Activated CD8-positive, alpha-beta memory T cell treated with anti-CD3 and anti-CD28 coated beads, Interleukin-2, amount 10 ng/mL, durations not matched to agents 7 days and 5 days (primary cell): ENCODE measurements at regions of chr6 and their contacts with region 1.

Region 1: GRCh38 chr6:31087494-31088089 is 24.8 kb downstream of the C6orf15 start:
- DNase-seq: peak; percentile 91
- ATAC-seq: peak; percentile 97
- H3K4me3 Mint-ChIP-seq: no peak overlapping the region
- H3K27ac Mint-ChIP-seq: no peak overlapping the region
- H3K4me1 Mint-ChIP-seq: peaks cover 6% of the 10 kb centered on the region
- H3K27me3 Mint-ChIP-seq: peaks cover 23% of the 10 kb centered on the region

Region 2: GRCh38 chr6:30907758-30908591 is 179.6 kb before region 1 on chr6 and contains the start of gene GTF2H4:
- CTCF ChIA-PET with region 1: interaction called, 39 read pairs
- DNase-seq: peak; percentile 98
- ATAC-seq: peak; percentile 98
- H3K4me3 Mint-ChIP-seq: peak within 1 kb of the TSS; percentile 97
- H3K27ac Mint-ChIP-seq: peak within 1 kb of the TSS; percentile 78
- H3K4me1 Mint-ChIP-seq: peaks cover 19% of the 10 kb centered on the region
- H3K27me3 Mint-ChIP-seq: no peaks in the 10 kb centered on the region
- total RNA-seq, gene GTF2H4: 30.0 to 34.9 TPM

Region 3: DNA sequence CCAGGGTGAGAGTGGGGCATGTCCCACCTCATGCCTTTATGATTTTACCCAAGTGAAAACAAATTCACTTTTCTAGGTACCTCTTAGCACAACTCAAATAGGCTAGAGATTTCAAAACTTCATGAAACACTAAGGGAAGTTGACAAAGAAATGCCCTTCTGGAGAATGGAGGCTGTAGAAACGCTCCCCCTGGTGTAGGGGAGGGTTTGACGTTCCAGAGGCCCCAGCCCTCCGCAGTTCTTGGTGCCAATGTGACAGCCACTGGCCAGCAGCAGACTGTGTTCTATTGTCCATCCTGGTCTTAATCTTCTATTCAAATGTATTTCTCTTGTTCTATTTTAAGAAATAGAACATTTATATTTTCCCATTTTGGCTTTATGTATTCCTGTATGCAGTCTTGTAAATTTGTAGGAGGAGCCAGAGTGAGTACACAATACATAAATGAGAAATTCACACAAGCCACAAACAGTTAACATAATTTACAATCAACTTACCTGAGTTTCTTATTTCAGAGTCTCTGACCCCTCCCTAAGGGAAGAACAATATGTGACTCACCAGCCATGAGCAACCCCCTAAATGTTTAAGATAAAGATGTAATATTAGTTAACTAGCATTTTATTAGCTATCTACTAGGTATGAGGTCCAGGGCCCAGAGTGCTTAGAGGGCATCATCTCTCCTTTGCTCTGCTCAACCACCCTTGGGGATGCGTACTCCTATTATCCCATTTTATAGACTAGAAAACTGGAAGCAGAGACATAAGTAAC is 112.9 kb before region 1 on chr6:
- CTCF ChIA-PET with region 1: no interaction called
- DNase-seq: no peak
- ATAC-seq: no peak
- H3K4me3 Mint-ChIP-seq: no peak overlapping the region
- H3K27ac Mint-ChIP-seq: no peak overlapping the region
- H3K4me1 Mint-ChIP-seq: no peaks in the 10 kb centered on the region
- H3K27me3 Mint-ChIP-seq: peaks cover 65% of the 10 kb centered on the region

Region 4: GRCh38 chr6:31042806-31043205 is 44.8 kb before region 1 on chr6:
- CTCF ChIA-PET with region 1: interaction called, 11 read pairs
- DNase-seq: no peak
- ATAC-seq: no peak
- H3K4me3 Mint-ChIP-seq: no peak overlapping the region
- H3K27ac Mint-ChIP-seq: no peak overlapping the region
- H3K4me1 Mint-ChIP-seq: no peaks in the 10 kb centered on the region
- H3K27me3 Mint-ChIP-seq: peaks cover 58% of the 10 kb centered on the region

Region 5: DNA sequence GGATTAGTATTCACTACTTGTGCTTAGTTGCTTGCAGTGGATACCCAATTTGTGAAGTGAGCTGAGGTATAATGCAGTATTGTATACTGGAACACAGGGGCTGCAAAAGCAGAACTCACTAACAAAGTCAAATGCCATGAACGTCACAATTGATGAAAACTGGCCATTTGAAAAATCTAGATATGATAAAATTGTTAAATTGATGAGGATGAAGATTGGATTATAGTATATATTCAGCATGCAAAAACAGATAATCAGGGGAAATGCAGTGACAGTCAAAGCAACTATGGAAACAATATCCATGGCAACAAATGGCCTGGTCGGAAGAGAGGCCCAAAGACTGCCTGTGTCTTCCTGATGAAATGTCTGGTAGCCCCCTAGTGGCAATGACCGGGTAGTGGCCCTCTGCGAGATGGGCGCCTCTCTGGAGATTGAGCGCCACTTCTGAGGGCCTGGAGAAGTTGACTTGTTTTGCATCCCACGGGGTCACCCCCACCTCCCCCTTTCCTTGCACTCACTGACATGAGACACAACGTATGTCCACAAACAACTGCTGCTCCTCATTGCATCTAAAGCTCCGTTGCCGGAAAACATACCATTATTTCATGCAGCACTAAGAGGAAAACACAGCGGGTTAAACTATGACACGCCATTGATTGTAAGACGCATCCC is 18.8 kb before region 1 on chr6:
- CTCF ChIA-PET with region 1: interaction called, 36 read pairs
- DNase-seq: peak; percentile 85
- ATAC-seq: peak; percentile 99
- H3K4me3 Mint-ChIP-seq: no peak overlapping the region
- H3K27ac Mint-ChIP-seq: no peak overlapping the region
- H3K4me1 Mint-ChIP-seq: no peaks in the 10 kb centered on the region
- H3K27me3 Mint-ChIP-seq: peaks cover 15% of the 10 kb centered on the region

Region 6: GRCh38 chr6:31114970-31115849 is 27.6 kb after region 1 on chr6:
- CTCF ChIA-PET with region 1: no interaction called
- DNase-seq: no peak
- ATAC-seq: no peak
- H3K4me3 Mint-ChIP-seq: no peak overlapping the region
- H3K27ac Mint-ChIP-seq: no peak overlapping the region
- H3K4me1 Mint-ChIP-seq: no peaks in the 10 kb centered on the region
- H3K27me3 Mint-ChIP-seq: peaks cover 36% of the 10 kb centered on the region

Region 7: DNA sequence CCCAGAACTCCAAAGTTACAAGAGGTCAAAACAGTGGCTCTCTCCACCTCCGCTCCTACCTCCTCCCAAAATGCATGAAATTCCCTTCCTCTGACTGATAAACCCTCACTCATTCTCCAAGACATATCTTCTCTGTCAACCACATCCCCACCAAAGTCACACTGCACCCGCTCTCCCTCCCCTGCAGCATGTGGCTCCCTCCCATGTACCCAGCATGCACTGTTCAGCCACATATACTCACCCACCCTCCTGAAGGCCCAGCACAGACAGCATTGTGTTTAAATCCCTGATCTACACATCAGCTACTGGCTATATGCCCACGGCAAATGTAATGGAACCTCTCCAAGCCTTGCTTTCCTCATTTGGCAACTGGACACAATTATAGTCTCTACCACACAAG is 88.4 kb after region 1 on chr6:
- CTCF ChIA-PET with region 1: no interaction called
- DNase-seq: no peak
- ATAC-seq: no peak
- H3K4me3 Mint-ChIP-seq: no peak overlapping the region
- H3K27ac Mint-ChIP-seq: no peak overlapping the region
- H3K4me1 Mint-ChIP-seq: peaks cover 28% of the 10 kb centered on the region
- H3K27me3 Mint-ChIP-seq: no peaks in the 10 kb centered on the region

Region 8: GRCh38 chr6:31304683-31305082 is 217.1 kb after region 1 on chr6:
- CTCF ChIA-PET with region 1: no interaction called
- DNase-seq: no peak
- ATAC-seq: no peak
- H3K4me3 Mint-ChIP-seq: no peak overlapping the region
- H3K27ac Mint-ChIP-seq: no peak overlapping the region
- H3K4me1 Mint-ChIP-seq: peaks cover 7% of the 10 kb centered on the region
- H3K27me3 Mint-ChIP-seq: peaks cover 55% of the 10 kb centered on the region